Right cardiac atrium (tissue), 5 donors: ENCODE measurements at regions of chr4 and their contacts with region 1.

Region 1: DNA sequence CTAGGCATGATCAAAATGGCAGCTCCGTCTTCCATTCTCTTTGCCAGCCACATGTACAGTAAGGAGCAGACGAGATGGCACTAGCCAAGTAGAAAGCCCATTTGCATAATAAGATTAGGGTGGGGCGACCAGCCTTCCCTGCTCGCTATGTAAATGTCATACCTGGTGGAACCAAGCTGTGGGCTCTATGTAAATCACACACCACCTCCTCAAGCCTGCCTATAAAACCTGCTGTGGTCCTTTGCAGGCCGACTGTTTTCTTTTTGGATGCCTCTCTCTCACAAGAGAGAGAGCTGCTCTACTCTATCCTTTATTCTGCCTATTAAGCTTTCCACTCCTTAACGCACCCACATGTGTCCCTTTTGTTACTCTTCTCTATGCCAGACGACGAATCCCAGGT is 1472.7 kb downstream of the ARAP2 start:
- DNase-seq: no peak
- ATAC-seq: no peak
- H3K4me3 ChIP-seq: no peak overlapping the region
- H3K27ac ChIP-seq: no peak overlapping the region
- H3K4me1 ChIP-seq: no peaks in the 10 kb centered on the region
- H3K27me3 ChIP-seq: no peaks in the 10 kb centered on the region

Region 2: GRCh38 chr4:34733185-34733941 is 38.3 kb before region 1 on chr4:
- intact Hi-C with region 1: no loop called
- DNase-seq: no peak
- ATAC-seq: no peak
- H3K4me3 ChIP-seq: no peak overlapping the region
- H3K27ac ChIP-seq: no peak overlapping the region
- H3K4me1 ChIP-seq: no peaks in the 10 kb centered on the region
- H3K27me3 ChIP-seq: no peaks in the 10 kb centered on the region

Region 3: GRCh38 chr4:34826660-34827059 is 55.0 kb after region 1 on chr4:
- intact Hi-C with region 1: loop called in 2 of 4 experiments (anchors 5 to 10 kb)
- DNase-seq: no peak
- ATAC-seq: no peak
- H3K4me3 ChIP-seq: no peak overlapping the region
- H3K27ac ChIP-seq: no peak overlapping the region
- H3K4me1 ChIP-seq: no peaks in the 10 kb centered on the region
- H3K27me3 ChIP-seq: no peaks in the 10 kb centered on the region